ENCODE measurements at regions of chr22 and their contacts with region 1.

Region 1: DNA sequence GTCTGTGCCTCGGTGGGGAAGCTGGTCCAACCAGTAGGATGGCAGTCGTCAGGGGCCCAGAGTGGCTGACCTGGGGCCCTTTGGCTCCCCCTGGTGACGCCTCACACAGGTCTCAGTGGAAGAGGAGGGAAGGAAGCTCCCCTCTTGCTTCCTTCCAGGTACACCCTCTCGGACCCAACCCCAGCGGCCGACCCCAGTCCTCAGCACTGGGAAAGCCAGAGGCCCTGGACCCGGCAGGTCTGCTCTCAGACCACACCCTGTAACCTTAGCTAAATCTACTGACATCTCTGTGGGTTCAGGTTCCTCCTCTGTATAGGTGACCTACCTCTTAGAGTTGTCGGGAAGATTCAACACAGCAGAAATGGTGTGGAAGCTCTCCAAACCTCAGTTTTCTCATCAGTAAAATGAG is 3.4 kb upstream of the SCUBE1 start:
- DNase-seq: peak; percentile 37 to 65
- ATAC-seq: peak; percentile 59 to 87; a peak in 4 of 6 replicates
- H3K4me3 ChIP-seq: no peak overlapping the region
- H3K27ac ChIP-seq: no peak overlapping the region
- H3K4me1 ChIP-seq: peaks cover 11% of the 10 kb centered on the region
- CTCF ChIP-seq: peak; percentile 48
- EP300 ChIP-seq: no peak
- POLR2A ChIP-seq: no peak
- RAD21 ChIP-seq: peak; percentile 51 to 65; a peak in 4 of 5 replicates

Region 2: DNA sequence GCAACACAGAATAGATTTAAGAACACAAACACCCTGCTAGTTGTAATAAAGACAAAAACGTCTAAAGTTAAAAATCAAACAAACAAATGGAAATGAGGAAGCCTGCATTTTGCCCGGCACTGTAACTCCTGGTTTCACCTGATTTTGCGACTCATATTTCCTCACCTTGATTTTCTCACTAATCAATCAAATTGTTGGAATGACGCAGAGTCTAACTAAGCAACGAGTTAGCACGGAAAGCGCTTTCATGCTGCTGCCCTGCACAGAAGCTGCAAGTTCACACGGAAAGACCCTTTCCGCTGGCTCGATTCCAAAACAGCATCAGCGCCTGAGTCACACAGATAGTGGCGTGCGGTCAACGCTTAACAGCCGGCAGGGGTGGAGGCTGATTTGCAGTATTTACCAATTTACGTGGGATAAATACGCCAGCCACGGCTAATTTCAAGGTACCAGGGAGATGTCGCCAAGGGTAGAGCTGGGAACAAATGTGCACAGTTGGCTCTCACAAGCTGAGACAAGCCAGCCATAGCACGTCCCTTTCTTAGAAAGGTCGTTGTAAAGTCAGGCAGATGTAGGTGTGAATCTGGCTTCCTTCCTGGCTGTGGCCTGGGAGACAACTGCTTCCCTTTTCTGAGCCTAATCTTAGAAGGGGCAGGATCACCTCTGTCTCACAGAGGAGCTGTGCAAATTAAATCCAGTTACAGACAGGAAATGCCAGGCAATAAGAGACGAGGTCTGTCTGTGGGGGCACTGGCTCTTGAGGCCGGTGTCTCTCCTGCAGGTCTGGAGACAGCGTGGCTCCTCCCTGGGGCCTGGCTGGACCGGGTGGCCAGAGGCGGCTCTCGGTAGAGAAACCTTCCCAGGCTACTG is 82.6 kb before region 1 on chr22:
- CTCF ChIA-PET with region 1: interaction called, 18 read pairs
- POLR2A ChIA-PET with region 1: no interaction called
- DNase-seq: no peak
- ATAC-seq: no peak
- H3K4me3 ChIP-seq: no peak overlapping the region
- H3K27ac ChIP-seq: no peak overlapping the region
- H3K4me1 ChIP-seq: no peaks in the 10 kb centered on the region
- CTCF ChIP-seq: no peak
- EP300 ChIP-seq: no peak
- POLR2A ChIP-seq: no peak
- RAD21 ChIP-seq: no peak

Region 3: DNA sequence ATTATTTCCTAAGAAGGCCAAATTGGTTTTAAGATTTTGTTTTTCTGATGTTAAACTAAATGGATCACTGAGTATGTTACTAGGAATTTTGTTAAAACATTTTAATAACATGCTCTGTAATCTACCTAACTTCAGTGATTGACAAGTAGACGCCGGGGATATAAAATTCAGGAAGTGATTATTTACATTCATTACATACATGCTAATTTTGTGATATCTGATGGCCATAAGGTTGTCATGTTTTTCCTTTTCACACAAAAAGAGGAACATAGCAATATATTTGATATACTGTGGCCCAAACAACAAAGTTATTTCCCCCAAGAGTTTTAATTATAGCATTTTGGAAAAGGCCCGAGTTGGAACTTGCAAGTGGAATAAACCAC is 15.5 kb before region 1 on chr22:
- CTCF ChIA-PET with region 1: interaction called, 15 read pairs
- POLR2A ChIA-PET with region 1: no interaction called
- DNase-seq: no peak
- ATAC-seq: no peak
- H3K4me3 ChIP-seq: no peak overlapping the region
- H3K27ac ChIP-seq: no peak overlapping the region
- H3K4me1 ChIP-seq: no peaks in the 10 kb centered on the region
- CTCF ChIP-seq: no peak
- EP300 ChIP-seq: no peak
- POLR2A ChIP-seq: no peak
- RAD21 ChIP-seq: no peak

Region 4: GRCh38 chr22:43363315-43364168 is 17.0 kb after region 1 on chr22:
- CTCF ChIA-PET with region 1: interaction called, 28 read pairs
- POLR2A ChIA-PET with region 1: no interaction called
- DNase-seq: no peak
- ATAC-seq: no peak
- H3K4me3 ChIP-seq: no peak overlapping the region
- H3K27ac ChIP-seq: no peak overlapping the region
- H3K4me1 ChIP-seq: no peaks in the 10 kb centered on the region
- CTCF ChIP-seq: no peak
- EP300 ChIP-seq: no peak
- POLR2A ChIP-seq: no peak
- RAD21 ChIP-seq: no peak

Region 5: GRCh38 chr22:43658823-43659222 is 312.3 kb after region 1 on chr22:
- CTCF ChIA-PET with region 1: no interaction called
- POLR2A ChIA-PET with region 1: no interaction called
- DNase-seq: no peak
- ATAC-seq: no peak
- H3K4me3 ChIP-seq: no peak overlapping the region
- H3K27ac ChIP-seq: no peak overlapping the region
- H3K4me1 ChIP-seq: no peaks in the 10 kb centered on the region
- CTCF ChIP-seq: no peak
- EP300 ChIP-seq: no peak
- POLR2A ChIP-seq: no peak
- RAD21 ChIP-seq: no peak

Measured in A549 (cell line).